ENCODE measurements at regions of chr17 and their contacts with region 1.

Region 1: GRCh38 chr17:59440784-59441441 is 109.5 kb downstream of the YPEL2 start:
- DNase-seq: peak; percentile 77 to 93 (median 78)
- ATAC-seq: peak; percentile 99
- H3K4me3 ChIP-seq: no peak overlapping the region
- H3K27ac ChIP-seq: no peak overlapping the region
- H3K4me1 ChIP-seq: no peaks in the 10 kb centered on the region
- H3K27me3 ChIP-seq: peaks cover 8 to 11% of the 10 kb centered on the region in 2 experiments; a peak in 4 of 5 replicates
- CTCF ChIP-seq: peak; percentile 85 to 92 (median 89)
- EP300 ChIP-seq: no peak
- POLR2A ChIP-seq: no peak
- RAD21 ChIP-seq: peak; percentile 90 to 96

Region 2: GRCh38 chr17:59220376-59221158 is 220.3 kb before region 1 on chr17 and contains the start of gene GDPD1:
- CTCF ChIA-PET with region 1: no interaction called
- POLR2A ChIA-PET with region 1: no interaction called
- in situ Hi-C with region 1: loop called (anchors 5 kb)
- intact Hi-C with region 1: loop called (anchors 2 kb)
- DNase-seq: peak; percentile 95 to 99 (median 97)
- ATAC-seq: peak; percentile 98
- H3K4me3 ChIP-seq: peak within 1 kb of the TSS; percentile 93
- H3K27ac ChIP-seq: peak within 1 kb of the TSS; percentile 90
- H3K4me1 ChIP-seq: peaks cover 3 to 11% of the 10 kb centered on the region in 2 experiments; a peak in 2 of 5 replicates
- H3K27me3 ChIP-seq: no peaks in the 10 kb centered on the region
- CTCF ChIP-seq: peak; percentile 80 to 89 (median 83)
- EP300 ChIP-seq: no peak
- POLR2A ChIP-seq: peak; percentile 78
- RAD21 ChIP-seq: peak; percentile 82 to 90
- polyA plus RNA-seq, gene GDPD1: 7.8 to 8.1 TPM

Region 3: GRCh38 chr17:59234631-59235030 is 206.3 kb before region 1 on chr17:
- CTCF ChIA-PET with region 1: no interaction called
- POLR2A ChIA-PET with region 1: no interaction called
- in situ Hi-C with region 1: no loop called
- intact Hi-C with region 1: no loop called
- DNase-seq: no peak
- ATAC-seq: no peak
- H3K4me3 ChIP-seq: no peak overlapping the region
- H3K27ac ChIP-seq: no peak overlapping the region
- H3K4me1 ChIP-seq: no peaks in the 10 kb centered on the region
- H3K27me3 ChIP-seq: no peaks in the 10 kb centered on the region
- CTCF ChIP-seq: no peak
- EP300 ChIP-seq: no peak
- POLR2A ChIP-seq: no peak
- RAD21 ChIP-seq: no peak

Region 4: DNA sequence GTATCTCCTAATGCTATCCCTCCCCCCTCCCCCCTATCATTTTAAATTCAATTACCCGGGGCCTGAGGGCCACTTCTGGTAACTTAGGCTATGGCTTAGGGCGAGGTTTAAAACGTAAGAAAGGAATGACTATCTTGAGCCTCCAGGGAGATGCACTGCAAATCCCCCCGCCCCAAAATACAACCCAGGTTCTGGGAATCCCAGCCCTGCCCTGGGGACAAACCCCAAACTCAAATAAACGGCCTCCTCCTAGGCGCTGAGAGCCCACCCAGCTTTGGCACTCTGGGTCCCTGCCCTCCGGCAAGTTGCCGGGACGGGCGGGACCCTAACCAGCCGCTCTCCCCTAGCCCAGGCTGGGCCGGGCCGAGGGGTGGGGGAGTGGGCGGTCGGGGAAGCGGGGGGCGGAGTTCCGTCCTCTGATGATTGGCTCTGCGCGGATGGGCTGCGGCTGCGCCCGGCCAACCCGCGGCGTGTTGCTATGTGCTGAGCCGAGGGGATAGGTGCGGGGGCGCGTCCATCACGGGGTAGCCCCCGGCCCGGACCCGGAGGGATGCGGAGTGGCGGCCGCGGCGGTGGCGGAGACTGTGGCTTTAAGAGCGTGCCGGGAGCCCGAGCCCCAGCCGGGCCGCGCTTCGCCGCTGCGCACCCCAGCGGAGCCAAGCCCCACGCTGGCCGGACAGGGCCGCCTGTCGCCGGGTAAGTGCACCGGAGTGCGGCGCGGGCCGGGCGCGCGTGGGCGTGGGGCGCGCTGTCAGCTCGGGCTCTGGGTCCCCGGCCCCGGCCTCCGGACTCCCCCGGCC is 109.6 kb before region 1 on chr17 and contains the start of gene YPEL2:
- CTCF ChIA-PET with region 1: interaction called, 5 read pairs
- POLR2A ChIA-PET with region 1: interaction called, 3 read pairs
- in situ Hi-C with region 1: no loop called
- intact Hi-C with region 1: loop called (anchors 1 kb)
- DNase-seq: peak; percentile 91 to 99 (median 98)
- ATAC-seq: peak; percentile 98
- H3K4me3 ChIP-seq: peak within 1 kb of the TSS; percentile 51
- H3K27ac ChIP-seq: no peak within 1 kb of the TSS
- H3K4me1 ChIP-seq: peaks cover 16 to 23% of the 10 kb centered on the region in 2 experiments; a peak in 4 of 5 replicates
- H3K27me3 ChIP-seq: peaks cover 30 to 34% of the 10 kb centered on the region in 2 experiments
- CTCF ChIP-seq: no peak
- EP300 ChIP-seq: no peak
- POLR2A ChIP-seq: no peak
- RAD21 ChIP-seq: no peak
- polyA plus RNA-seq, gene YPEL2: 0.11 to 0.13 TPM